BJ (cell line): ENCODE measurements at regions of chr7 and their contacts with region 1.

Region 1: GRCh38 chr7:142587578-142588191 is 161.6 kb upstream of the PRSS1 start:
- DNase-seq: no peak
- H3K4me3 ChIP-seq: no peak overlapping the region
- H3K27me3 ChIP-seq: no peaks in the 10 kb centered on the region
- CTCF ChIP-seq: peak; percentile 84

Region 2: GRCh38 chr7:142300689-142301088 is 287.0 kb before region 1 on chr7:
- CTCF ChIA-PET with region 1: no interaction called
- POLR2A ChIA-PET with region 1: no interaction called
- DNase-seq: no peak
- H3K4me3 ChIP-seq: no peak overlapping the region
- H3K27me3 ChIP-seq: no peaks in the 10 kb centered on the region
- CTCF ChIP-seq: no peak

Region 3: GRCh38 chr7:142516038-142516501 is 71.6 kb before region 1 on chr7:
- CTCF ChIA-PET with region 1: interaction called, 12 read pairs
- POLR2A ChIA-PET with region 1: no interaction called
- DNase-seq: no peak
- H3K4me3 ChIP-seq: no peak overlapping the region
- H3K27me3 ChIP-seq: peaks cover 2% of the 10 kb centered on the region
- CTCF ChIP-seq: peak; percentile 83

Region 4: DNA sequence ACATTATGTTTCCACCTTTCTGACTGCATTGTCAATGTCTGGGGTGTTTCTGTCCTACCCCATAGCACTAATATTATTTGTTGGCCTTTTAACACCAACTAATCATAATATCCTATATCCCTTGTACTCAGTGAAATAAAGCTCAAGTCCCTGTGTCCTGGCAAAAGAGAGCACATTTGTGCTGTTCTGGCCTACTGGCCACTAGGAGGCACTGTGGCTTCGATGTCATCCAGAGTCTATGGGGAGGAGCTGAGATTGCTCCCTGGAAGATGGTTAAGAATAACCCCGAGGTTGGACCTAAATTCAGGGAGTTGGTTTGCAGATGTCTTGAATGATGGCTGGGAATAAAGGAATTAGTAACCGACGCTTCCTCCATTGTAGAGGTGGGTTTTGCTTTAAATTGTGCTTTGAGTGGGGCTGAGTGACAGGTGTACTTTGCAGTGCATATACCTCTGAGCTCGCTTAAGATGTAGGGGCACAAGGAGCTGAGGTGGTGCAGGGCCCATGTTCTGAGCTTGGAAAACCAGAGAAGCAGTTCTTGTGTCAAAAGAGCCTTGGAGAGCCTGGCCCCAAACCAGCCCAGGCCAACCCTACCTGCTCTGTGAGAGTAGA is 29.6 kb before region 1 on chr7:
- CTCF ChIA-PET with region 1: interaction called, 14 read pairs
- POLR2A ChIA-PET with region 1: interaction called, 4 read pairs
- DNase-seq: no peak
- H3K4me3 ChIP-seq: no peak overlapping the region
- H3K27me3 ChIP-seq: no peaks in the 10 kb centered on the region
- CTCF ChIP-seq: peak; percentile 78

Region 5: DNA sequence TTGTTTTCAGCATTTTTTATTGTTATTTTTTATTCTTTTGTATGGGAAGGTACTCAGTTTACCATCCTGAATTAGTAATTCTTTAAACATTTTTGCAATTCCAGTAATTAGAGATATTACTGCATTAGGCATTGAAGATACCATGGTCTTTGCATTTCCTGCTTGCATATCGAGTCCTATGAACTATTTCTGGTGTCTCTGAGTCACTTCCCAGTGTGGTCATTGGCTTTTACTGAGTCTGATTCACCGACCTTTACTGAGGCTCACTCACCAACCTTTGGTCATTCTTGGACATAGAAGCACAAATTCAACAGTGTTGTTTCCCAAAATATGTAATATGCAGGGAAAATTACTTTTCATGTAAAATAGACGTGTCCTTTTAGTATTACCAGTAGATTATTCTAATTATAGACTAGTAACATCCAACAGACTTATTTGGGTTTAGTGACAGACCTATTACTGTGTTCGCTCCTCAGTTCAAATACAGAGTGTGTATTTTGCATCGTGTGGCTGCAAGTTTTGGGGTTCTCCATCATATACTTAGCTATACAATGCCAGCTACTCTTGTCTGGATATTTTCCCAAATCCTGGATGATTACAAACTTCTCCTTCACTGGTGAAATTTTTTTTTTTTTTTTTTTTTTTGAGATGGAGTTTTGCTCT is 19.1 kb before region 1 on chr7:
- CTCF ChIA-PET with region 1: interaction called, 24 read pairs
- POLR2A ChIA-PET with region 1: no interaction called
- DNase-seq: peak; percentile 67
- H3K4me3 ChIP-seq: no peak overlapping the region
- H3K27me3 ChIP-seq: no peaks in the 10 kb centered on the region
- CTCF ChIP-seq: no peak

Region 6: GRCh38 chr7:142598297-142598696 is 10.6 kb after region 1 on chr7:
- CTCF ChIA-PET with region 1: interaction called, 52 read pairs
- POLR2A ChIA-PET with region 1: interaction called, 4 read pairs
- DNase-seq: no peak
- H3K4me3 ChIP-seq: no peak overlapping the region
- H3K27me3 ChIP-seq: no peaks in the 10 kb centered on the region
- CTCF ChIP-seq: no peak